Activated naive CD4-positive, alpha-beta T cell treated with anti-CD3 and anti-CD28 coated beads for 36 hours (primary cell): ENCODE measurements at regions of chr1 and their contacts with region 1.

Region 1: GRCh38 chr1:160031365-160032164 is at the start of gene PIGM:
- DNase-seq: peak; percentile 98
- H3K4me3 Mint-ChIP-seq: peak within 1 kb of the TSS; percentile 93
- H3K27ac Mint-ChIP-seq: peak within 1 kb of the TSS; percentile 87
- H3K4me1 Mint-ChIP-seq: peaks cover 25% of the 10 kb centered on the region
- H3K27me3 Mint-ChIP-seq: no peaks in the 10 kb centered on the region
- total RNA-seq, gene PIGM: 2.6 TPM

Region 2: DNA sequence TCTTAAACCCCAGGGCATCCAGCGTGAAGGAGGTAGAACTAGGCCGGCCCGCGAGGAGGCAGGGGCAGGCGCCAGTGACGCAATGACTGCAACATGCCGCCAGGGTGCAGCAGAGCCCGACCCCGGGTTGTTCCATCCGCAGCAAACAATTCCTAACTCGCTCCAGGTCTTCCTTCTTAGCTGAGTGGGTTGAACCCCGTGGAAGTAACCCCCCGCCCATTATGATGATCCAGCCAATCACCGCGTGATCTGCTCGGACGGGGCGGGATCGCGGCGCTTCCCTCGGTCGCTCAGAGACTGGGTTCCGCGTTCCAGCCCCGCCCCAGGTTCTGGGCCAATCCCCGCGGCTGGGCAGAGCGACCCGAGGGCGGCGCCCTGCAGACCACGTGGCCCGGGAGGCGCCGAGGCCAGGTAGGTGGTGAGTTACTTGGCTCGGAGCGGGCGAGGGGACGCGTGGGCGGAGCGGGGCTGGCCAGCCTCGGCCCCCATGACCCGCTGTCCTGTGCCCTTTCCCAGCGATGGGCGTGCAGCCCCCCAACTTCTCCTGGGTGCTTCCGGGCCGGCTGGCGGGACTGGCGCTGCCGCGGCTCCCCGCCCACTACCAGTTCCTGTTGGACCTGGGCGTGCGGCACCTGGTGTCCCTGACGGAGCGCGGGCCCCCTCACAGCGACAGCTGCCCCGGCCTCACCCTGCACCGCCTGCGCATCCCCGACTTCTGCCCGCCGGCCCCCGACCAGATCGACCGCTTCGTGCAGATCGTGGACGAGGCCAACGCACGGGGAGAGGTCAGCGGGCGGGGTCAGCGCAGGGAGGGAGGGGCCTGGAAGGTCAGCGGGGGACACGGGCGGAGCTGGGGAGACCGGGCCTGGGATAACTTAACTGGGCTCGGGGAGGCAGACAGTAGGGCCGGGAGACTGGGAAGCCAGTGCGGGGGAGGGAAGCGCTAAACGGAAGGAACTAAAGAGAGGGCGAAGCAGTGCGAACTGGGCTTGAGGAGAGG is 250.7 kb before region 1 on chr1 and contains the start of gene DUSP23:
- CTCF ChIA-PET with region 1: no interaction called
- intact Hi-C with region 1: loop called (anchors 1 kb)
- DNase-seq: peak; percentile 96
- H3K4me3 Mint-ChIP-seq: peak within 1 kb of the TSS; percentile 73
- H3K27ac Mint-ChIP-seq: no peak within 1 kb of the TSS
- H3K4me1 Mint-ChIP-seq: peaks cover 7% of the 10 kb centered on the region
- H3K27me3 Mint-ChIP-seq: no peaks in the 10 kb centered on the region
- total RNA-seq, gene DUSP23: 13.0 to 14.1 TPM

Region 3: GRCh38 chr1:159991513-159991912 is 40.1 kb before region 1 on chr1:
- CTCF ChIA-PET with region 1: no interaction called
- intact Hi-C with region 1: loop called (anchors 2 kb)
- DNase-seq: peak; percentile 57
- H3K4me3 Mint-ChIP-seq: peak overlapping the region; percentile 19
- H3K27ac Mint-ChIP-seq: no peak overlapping the region
- H3K4me1 Mint-ChIP-seq: peaks cover 8% of the 10 kb centered on the region
- H3K27me3 Mint-ChIP-seq: no peaks in the 10 kb centered on the region

Region 4: GRCh38 chr1:160070243-160071163 is 38.9 kb after region 1 on chr1:
- CTCF ChIA-PET with region 1: interaction called, 565 read pairs
- intact Hi-C with region 1: loop called (anchors 2 kb)
- DNase-seq: peak; percentile 62
- H3K4me3 Mint-ChIP-seq: peak overlapping the region; percentile 82
- H3K27ac Mint-ChIP-seq: no peak overlapping the region
- H3K4me1 Mint-ChIP-seq: peaks cover 16% of the 10 kb centered on the region
- H3K27me3 Mint-ChIP-seq: peaks cover 15% of the 10 kb centered on the region

Region 5: DNA sequence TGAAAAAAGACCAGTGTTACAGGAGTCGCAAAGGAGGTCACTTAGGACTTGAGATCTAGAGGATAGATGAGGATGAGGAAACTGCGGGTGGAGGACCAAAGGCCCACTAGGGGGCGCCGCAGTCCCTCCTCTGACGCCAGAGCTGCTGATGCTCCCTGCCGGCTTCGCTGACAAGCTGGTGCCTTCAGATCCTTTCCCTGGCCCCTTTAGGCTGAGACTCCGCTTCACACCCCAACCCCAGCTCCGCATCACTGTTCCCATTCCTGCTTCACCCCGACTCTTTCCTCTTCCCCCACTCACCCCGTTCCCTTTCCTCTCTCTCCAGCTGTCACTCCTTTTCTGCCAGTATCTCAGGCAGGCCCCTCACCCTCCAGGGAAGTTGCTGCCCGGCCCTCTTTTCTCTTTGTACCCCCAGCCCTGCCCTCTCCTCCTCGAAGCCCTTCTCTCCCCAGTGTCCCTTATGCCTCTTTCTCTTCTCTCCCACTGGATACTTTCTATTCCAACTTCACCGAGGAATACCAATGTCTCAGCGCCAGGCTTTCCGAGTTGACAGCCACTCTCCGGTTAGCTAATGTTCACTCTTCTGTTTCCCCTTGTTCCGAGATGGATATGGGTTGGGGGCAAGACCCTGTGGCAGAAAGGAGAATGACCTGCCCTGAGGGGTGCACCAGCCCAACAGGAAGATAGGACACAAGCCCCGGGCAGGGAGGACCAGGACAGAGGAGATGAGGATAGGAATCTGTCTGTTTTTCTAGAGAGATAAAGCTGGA is 54.3 kb after region 1 on chr1:
- CTCF ChIA-PET with region 1: interaction called, 565 read pairs
- intact Hi-C with region 1: loop called (anchors 2 kb)
- DNase-seq: peak; percentile 88
- H3K4me3 Mint-ChIP-seq: no peak overlapping the region
- H3K27ac Mint-ChIP-seq: no peak overlapping the region
- H3K4me1 Mint-ChIP-seq: peaks cover 5% of the 10 kb centered on the region
- H3K27me3 Mint-ChIP-seq: peaks cover 17% of the 10 kb centered on the region